Naive thymus-derived CD4-positive, alpha-beta T cell (primary cell): ENCODE measurements at regions of chr11 and their contacts with region 1.

Region 1: GRCh38 chr11:35106595-35106994 is 32.4 kb upstream of the CD44 start:
- DNase-seq: peak in 5 of 9 donors; percentile 31 to 45 (median 38)
- ATAC-seq: peak; percentile 74
- H3K4me3 ChIP-seq: no peak overlapping the region
- H3K4me3 Mint-ChIP-seq: peak overlapping the region; percentile 16 to 78 (median 70)
- H3K27ac ChIP-seq: peak overlapping the region; percentile 66
- H3K27ac Mint-ChIP-seq: peak overlapping the region in 8 of 9 donors; percentile 83 to 97 (median 92)
- H3K4me1 ChIP-seq: peaks cover 16 to 45% of the 10 kb centered on the region in 2 donors
- H3K4me1 Mint-ChIP-seq: peaks cover 43 to 79% (median 68%) of the 10 kb centered on the region in 7 donors
- H3K27me3 ChIP-seq: no peaks in the 10 kb centered on the region
- H3K27me3 Mint-ChIP-seq: no peaks in the 10 kb centered on the region

Region 2: GRCh38 chr11:34948696-34949095 is 157.9 kb before region 1 on chr11:
- CTCF ChIA-PET with region 1: no interaction called
- POLR2A ChIA-PET with region 1: no interaction called
- intact Hi-C with region 1: no loop called
- DNase-seq: no peak
- ATAC-seq: no peak
- H3K4me3 ChIP-seq: no peak overlapping the region
- H3K4me3 Mint-ChIP-seq: no peak overlapping the region
- H3K27ac ChIP-seq: no peak overlapping the region
- H3K27ac Mint-ChIP-seq: no peak overlapping the region
- H3K4me1 ChIP-seq: no peaks in the 10 kb centered on the region
- H3K4me1 Mint-ChIP-seq: peaks cover 0 to 20% (median 14%) of the 10 kb centered on the region in 7 donors
- H3K27me3 ChIP-seq: no peaks in the 10 kb centered on the region
- H3K27me3 Mint-ChIP-seq: no peaks in the 10 kb centered on the region

Region 3: GRCh38 chr11:35058669-35059434 is 47.7 kb before region 1 on chr11:
- CTCF ChIA-PET with region 1: no interaction called
- POLR2A ChIA-PET with region 1: no interaction called
- intact Hi-C with region 1: no loop called
- DNase-seq: peak in 2 of 9 donors; percentile 20
- ATAC-seq: peak; percentile 69
- H3K4me3 ChIP-seq: no peak overlapping the region
- H3K4me3 Mint-ChIP-seq: peak overlapping the region; percentile 2 to 75 (median 48)
- H3K27ac ChIP-seq: peak overlapping the region; percentile 41
- H3K27ac Mint-ChIP-seq: peak overlapping the region in 8 of 9 donors; percentile 44 to 93 (median 80)
- H3K4me1 ChIP-seq: peaks cover 19 to 24% of the 10 kb centered on the region in 2 donors
- H3K4me1 Mint-ChIP-seq: peaks cover 27 to 56% (median 44%) of the 10 kb centered on the region in 7 donors
- H3K27me3 ChIP-seq: no peaks in the 10 kb centered on the region
- H3K27me3 Mint-ChIP-seq: no peaks in the 10 kb centered on the region

Region 4: DNA sequence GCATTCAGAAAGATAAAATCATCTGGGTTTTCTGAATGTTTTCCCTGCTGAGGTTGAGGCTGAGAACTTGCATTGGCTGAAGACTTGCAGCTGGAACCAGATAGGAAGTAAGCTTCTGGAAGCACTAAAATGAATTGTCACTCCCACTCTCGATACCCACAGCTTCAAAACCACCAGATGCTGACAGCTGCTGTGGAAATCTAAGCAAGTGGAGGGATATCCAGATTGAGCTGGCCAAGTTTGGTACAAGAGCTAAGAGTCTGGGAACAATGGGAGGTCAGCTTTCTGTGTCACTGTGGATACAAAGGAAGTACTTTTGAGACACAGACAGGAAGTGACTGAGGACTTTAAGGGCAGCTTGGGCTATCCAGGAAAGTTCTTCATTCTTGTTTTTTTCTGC is 18.9 kb before region 1 on chr11:
- CTCF ChIA-PET with region 1: no interaction called
- POLR2A ChIA-PET with region 1: interaction called, 5 read pairs
- intact Hi-C with region 1: loop called (anchors 1 to 2 kb)
- DNase-seq: peak in 3 of 9 donors; percentile 8 to 33 (median 18)
- ATAC-seq: no peak
- H3K4me3 ChIP-seq: no peak overlapping the region
- H3K4me3 Mint-ChIP-seq: peak overlapping the region in 7 of 10 donors; percentile 5 to 51 (median 43)
- H3K27ac ChIP-seq: no peak overlapping the region
- H3K27ac Mint-ChIP-seq: peak overlapping the region in 7 of 9 donors; percentile 50 to 97 (median 78)
- H3K4me1 ChIP-seq: peaks cover 37 to 56% of the 10 kb centered on the region in 2 donors
- H3K4me1 Mint-ChIP-seq: peaks cover 57 to 95% (median 90%) of the 10 kb centered on the region in 7 donors
- H3K27me3 ChIP-seq: no peaks in the 10 kb centered on the region
- H3K27me3 Mint-ChIP-seq: peaks cover 0 to 5% (median 0%) of the 10 kb centered on the region in 5 donors

Region 5: DNA sequence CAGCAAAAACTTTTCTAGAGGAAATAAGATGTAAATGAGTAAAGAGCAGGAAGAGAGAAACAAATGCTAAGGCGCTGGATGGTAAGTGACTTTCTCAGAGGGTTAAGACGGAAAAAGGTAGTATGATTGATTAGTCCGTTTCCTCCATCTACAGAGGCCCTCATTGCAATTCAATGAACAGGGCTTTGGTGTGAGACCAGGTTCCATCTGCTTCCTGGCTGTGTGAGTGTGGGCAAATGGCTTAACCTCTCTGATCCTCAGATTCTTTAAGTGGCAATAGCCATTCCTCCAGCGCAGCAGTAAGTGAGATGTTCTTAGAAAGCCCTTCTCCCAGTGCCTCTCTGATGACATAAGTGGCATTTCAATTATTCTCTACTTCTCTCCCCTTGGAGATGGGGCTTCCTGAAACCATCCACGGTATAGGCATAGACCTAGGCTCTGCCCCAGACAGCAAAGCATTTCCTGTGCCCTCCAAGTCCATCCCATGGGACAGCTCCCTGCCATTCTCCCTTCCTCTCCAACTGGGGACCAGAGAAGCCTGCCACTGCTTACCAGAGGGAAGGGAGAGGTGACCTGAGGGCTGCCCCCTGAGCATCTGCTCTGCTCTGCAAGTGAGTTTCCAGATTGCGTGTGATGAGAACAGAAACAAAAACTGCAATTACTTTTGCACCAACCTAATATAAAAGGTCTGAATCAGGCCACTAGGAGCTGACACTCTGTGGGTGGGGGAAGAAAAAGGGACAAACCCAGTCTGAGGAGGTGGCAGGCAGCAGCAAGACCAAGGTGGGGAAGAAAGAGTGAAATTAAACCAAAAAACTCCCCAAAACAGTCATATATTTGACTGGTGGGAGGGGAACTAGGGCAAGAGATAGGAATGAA is 19.6 kb after region 1 on chr11:
- CTCF ChIA-PET with region 1: no interaction called
- POLR2A ChIA-PET with region 1: interaction called, 8 read pairs
- intact Hi-C with region 1: loop called (anchors 1 to 2 kb)
- DNase-seq: peak in 2 of 9 donors; percentile 27 to 62
- ATAC-seq: peak; percentile 59
- H3K4me3 ChIP-seq: peak overlapping the region; percentile 17
- H3K4me3 Mint-ChIP-seq: peak overlapping the region; percentile 42 to 69 (median 60)
- H3K27ac ChIP-seq: peak overlapping the region; percentile 12
- H3K27ac Mint-ChIP-seq: peak overlapping the region; percentile 44 to 92 (median 82)
- H3K4me1 ChIP-seq: peaks cover 33 to 49% of the 10 kb centered on the region in 2 donors
- H3K4me1 Mint-ChIP-seq: peaks cover 32 to 69% (median 64%) of the 10 kb centered on the region in 7 donors
- H3K27me3 ChIP-seq: no peaks in the 10 kb centered on the region
- H3K27me3 Mint-ChIP-seq: peaks cover 0 to 8% (median 0%) of the 10 kb centered on the region in 5 donors